MCF 10A (cell line): ENCODE measurements at regions of chr4 and their contacts with region 1.

Region 1: GRCh38 chr4:128454281-128455075 is 166.9 kb upstream of the PGRMC2 start:
- DNase-seq: peak; percentile 93
- H3K4me3 Mint-ChIP-seq: no peak overlapping the region
- H3K27ac Mint-ChIP-seq: no peak overlapping the region
- H3K4me1 Mint-ChIP-seq: peaks cover 20% of the 10 kb centered on the region
- H3K27me3 Mint-ChIP-seq: no peaks in the 10 kb centered on the region
- CTCF ChIP-seq: peak; percentile 86

Region 2: GRCh38 chr4:128267745-128268144 is 186.7 kb before region 1 on chr4:
- CTCF ChIA-PET with region 1: no interaction called
- POLR2A ChIA-PET with region 1: no interaction called
- intact Hi-C with region 1: no loop called
- DNase-seq: no peak
- H3K4me3 Mint-ChIP-seq: no peak overlapping the region
- H3K27ac Mint-ChIP-seq: no peak overlapping the region
- H3K4me1 Mint-ChIP-seq: no peaks in the 10 kb centered on the region
- H3K27me3 Mint-ChIP-seq: no peaks in the 10 kb centered on the region
- CTCF ChIP-seq: no peak

Region 3: GRCh38 chr4:128386761-128387599 is 67.5 kb before region 1 on chr4:
- CTCF ChIA-PET with region 1: interaction called, 3 read pairs
- POLR2A ChIA-PET with region 1: interaction called, 10 read pairs
- intact Hi-C with region 1: no loop called
- DNase-seq: peak; percentile 94
- H3K4me3 Mint-ChIP-seq: peak overlapping the region; percentile 52
- H3K27ac Mint-ChIP-seq: peak overlapping the region; percentile 84
- H3K4me1 Mint-ChIP-seq: peaks cover 45% of the 10 kb centered on the region
- H3K27me3 Mint-ChIP-seq: no peaks in the 10 kb centered on the region
- CTCF ChIP-seq: no peak

Region 4: GRCh38 chr4:128483816-128484215 is 29.3 kb after region 1 on chr4:
- CTCF ChIA-PET with region 1: interaction called, 12 read pairs
- POLR2A ChIA-PET with region 1: interaction called, 3 read pairs
- intact Hi-C with region 1: no loop called
- DNase-seq: no peak
- H3K4me3 Mint-ChIP-seq: no peak overlapping the region
- H3K27ac Mint-ChIP-seq: no peak overlapping the region
- H3K4me1 Mint-ChIP-seq: no peaks in the 10 kb centered on the region
- H3K27me3 Mint-ChIP-seq: no peaks in the 10 kb centered on the region
- CTCF ChIP-seq: no peak

Region 5: DNA sequence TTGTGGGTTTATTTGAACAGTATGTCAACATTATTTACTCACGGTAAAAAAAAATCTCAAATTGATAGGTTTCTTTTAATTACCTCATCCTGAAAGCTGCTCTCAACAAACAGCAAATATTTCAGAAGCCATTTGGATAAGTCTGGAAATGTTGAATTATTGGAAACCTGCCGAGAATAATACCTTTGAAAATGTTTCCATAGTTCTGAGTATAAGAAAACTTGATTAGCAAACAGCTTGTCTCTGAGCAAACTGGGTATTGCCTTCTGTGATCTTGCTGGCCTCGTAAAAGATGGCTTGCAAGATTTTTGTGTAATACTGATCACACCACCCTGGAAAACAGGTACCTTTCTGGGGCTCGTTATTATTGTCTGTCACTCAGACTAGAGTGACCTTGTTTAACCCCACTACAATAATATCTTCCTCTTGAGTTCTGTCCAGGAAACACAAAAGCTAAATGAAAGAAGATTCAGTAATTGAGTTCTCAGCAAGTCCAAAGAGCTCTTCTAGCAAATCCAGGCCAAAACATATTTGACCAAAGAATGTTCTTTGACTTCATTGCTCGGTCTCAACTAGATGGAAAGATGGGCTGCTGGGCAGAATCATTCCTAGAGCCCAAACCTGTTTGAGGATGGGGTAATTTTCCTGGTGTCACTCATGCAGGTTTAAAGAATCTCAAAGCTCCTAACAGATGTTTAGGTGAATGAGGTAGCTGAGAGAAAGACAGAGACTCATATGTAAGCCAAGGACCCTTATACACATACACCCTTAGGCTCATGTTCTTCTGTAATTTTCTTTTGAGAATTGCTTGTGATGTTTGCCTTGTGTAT is 99.4 kb after region 1 on chr4:
- CTCF ChIA-PET with region 1: interaction called, 52 read pairs
- POLR2A ChIA-PET with region 1: interaction called, 14 read pairs
- intact Hi-C with region 1: loop called (anchors 1 kb)
- DNase-seq: peak; percentile 25
- H3K4me3 Mint-ChIP-seq: peak overlapping the region; percentile 77
- H3K27ac Mint-ChIP-seq: peak overlapping the region; percentile 98
- H3K4me1 Mint-ChIP-seq: peaks cover 11% of the 10 kb centered on the region
- H3K27me3 Mint-ChIP-seq: no peaks in the 10 kb centered on the region
- CTCF ChIP-seq: no peak

Region 6: DNA sequence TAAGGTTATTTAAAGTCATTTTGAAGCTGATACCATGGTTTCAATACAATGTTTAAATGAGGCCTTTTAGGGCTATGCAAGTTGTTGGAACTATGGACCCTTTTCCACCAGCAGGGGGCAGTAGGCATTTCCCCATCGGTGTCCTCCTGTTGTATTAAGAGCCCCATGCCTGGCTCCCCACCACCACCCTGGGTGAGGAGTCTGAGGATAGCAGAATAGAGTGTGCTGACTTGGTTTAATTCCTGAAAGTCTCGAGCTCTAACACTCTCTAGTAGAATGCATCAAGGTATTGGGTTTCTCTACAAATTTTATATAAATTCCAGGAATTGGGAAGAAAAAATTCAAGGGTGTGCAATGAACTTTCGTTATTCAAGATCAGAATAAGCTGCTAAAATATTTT is 120.2 kb after region 1 on chr4:
- CTCF ChIA-PET with region 1: interaction called, 22 read pairs
- POLR2A ChIA-PET with region 1: interaction called, 4 read pairs
- intact Hi-C with region 1: no loop called
- DNase-seq: peak; percentile 79
- H3K4me3 Mint-ChIP-seq: no peak overlapping the region
- H3K27ac Mint-ChIP-seq: no peak overlapping the region
- H3K4me1 Mint-ChIP-seq: peaks cover 32% of the 10 kb centered on the region
- H3K27me3 Mint-ChIP-seq: no peaks in the 10 kb centered on the region
- CTCF ChIP-seq: peak; percentile 61

Region 7: GRCh38 chr4:128809477-128810330 is 355.2 kb after region 1 on chr4 and contains the start of gene JADE1:
- CTCF ChIA-PET with region 1: interaction called, 14 read pairs
- POLR2A ChIA-PET with region 1: interaction called, 7 read pairs
- intact Hi-C with region 1: loop called (anchors 1 kb)
- DNase-seq: peak; percentile 96
- H3K4me3 Mint-ChIP-seq: peak within 1 kb of the TSS; percentile 93
- H3K27ac Mint-ChIP-seq: peak within 1 kb of the TSS; percentile 91
- H3K4me1 Mint-ChIP-seq: peaks cover 10% of the 10 kb centered on the region
- H3K27me3 Mint-ChIP-seq: no peaks in the 10 kb centered on the region
- CTCF ChIP-seq: peak; percentile 45
- total RNA-seq, gene JADE1: 22.7 and 25.9 TPM in 2 replicates